ENCODE measurements at regions of chr12 and their contacts with region 1.

Region 1: GRCh38 chr12:47079468-47079980 is at the starts of genes AMIGO2 and PCED1B:
- DNase-seq: peak; percentile 83 to 91 (median 85)
- H3K4me3 ChIP-seq: peak within 1 kb of the TSS; percentile 24 to 90 (median 57)
- H3K27ac ChIP-seq: peak within 1 kb of the TSS; percentile 68 to 93 (median 90)
- H3K4me1 ChIP-seq: peaks cover 6 to 42% of the 10 kb centered on the region in 2 donors
- H3K27me3 ChIP-seq: no peaks in the 10 kb centered on the region
- CTCF ChIP-seq: peak in 4 of 6 experiments; percentile 19 to 39 (median 32)
- POLR2A ChIP-seq: peak; percentile 17 to 69
- total RNA-seq, gene AMIGO2: 16.5 to 34.7 (median 29.9) TPM
- total RNA-seq, gene PCED1B: 8.0 to 110 (median 49.2) TPM

Region 2: GRCh38 chr12:47038270-47038748 is 41.2 kb before region 1 on chr12:
- intact Hi-C with region 1: loop called in 1 of 2 experiments (anchors 5 kb)
- DNase-seq: no peak
- H3K4me3 ChIP-seq: no peak overlapping the region
- H3K27ac ChIP-seq: no peak overlapping the region
- H3K4me1 ChIP-seq: peaks cover 0 to 5% of the 10 kb centered on the region in 2 donors
- H3K27me3 ChIP-seq: no peaks in the 10 kb centered on the region
- CTCF ChIP-seq: no peak
- POLR2A ChIP-seq: no peak

Region 3: DNA sequence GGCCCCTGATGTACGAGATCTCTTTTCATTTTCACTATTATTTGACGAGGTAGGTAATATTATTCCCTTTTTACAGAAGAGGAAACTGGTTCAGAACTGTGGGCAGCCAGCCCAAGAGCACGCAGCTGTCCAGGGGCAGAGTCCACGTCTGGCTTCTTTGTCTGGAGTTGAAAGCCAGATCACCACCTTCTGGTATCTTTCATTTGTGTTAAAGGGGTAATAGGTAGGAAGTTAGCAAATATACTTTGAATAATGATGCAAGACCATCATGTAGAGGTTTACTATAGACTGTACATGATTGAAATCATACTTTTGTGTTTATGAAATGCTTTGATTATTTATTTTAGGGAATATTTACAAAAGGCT is 144.3 kb after region 1 on chr12:
- intact Hi-C with region 1: loop called in 1 of 2 experiments (anchors 10 kb)
- DNase-seq: peak in 6 of 7 donors; percentile 55 to 75 (median 61)
- H3K4me3 ChIP-seq: peak overlapping the region in 2 of 4 donors; percentile 15 to 51
- H3K27ac ChIP-seq: peak overlapping the region; percentile 27 to 90 (median 82)
- H3K4me1 ChIP-seq: peaks cover 21 to 31% of the 10 kb centered on the region in 2 donors
- H3K27me3 ChIP-seq: no peaks in the 10 kb centered on the region
- CTCF ChIP-seq: no peak
- POLR2A ChIP-seq: peak in 1 of 2 donors; percentile 23

Region 4: DNA sequence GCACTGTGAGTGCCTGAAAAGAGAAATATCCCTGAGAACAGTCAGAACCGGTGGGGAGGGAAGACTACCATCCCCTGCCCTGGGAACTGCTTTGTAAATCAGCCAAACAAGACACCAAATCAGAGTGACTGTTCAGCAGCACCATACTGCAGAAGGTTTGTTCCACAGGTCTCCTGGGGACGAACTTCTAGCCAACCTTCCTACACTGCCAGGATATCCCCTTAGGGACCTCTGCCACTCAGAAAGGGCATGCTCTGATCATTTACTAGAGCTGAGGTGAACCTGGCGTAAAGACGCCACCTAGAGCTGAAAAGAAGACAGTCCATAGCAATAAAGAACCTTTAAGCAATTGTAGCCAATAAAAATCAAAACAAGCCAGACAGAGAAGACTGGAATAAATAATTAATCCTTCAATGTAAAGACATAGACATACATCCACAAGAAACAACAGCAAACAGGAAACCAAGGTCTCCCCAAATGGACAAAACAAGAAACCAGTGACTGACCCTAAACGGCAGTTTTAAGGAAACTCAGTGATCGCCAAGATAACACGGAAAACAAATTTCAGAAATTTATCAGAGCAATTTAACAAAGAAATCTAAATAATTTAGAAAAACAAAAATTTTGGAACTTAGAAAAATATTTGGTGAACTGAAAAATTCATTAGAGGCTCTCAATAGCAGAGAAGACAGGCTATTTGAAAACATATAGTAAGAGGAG is 228.3 kb after region 1 on chr12:
- intact Hi-C with region 1: loop called in 1 of 2 experiments (anchors 5 kb)
- DNase-seq: peak; percentile 31 to 74 (median 47)
- H3K4me3 ChIP-seq: no peak overlapping the region
- H3K27ac ChIP-seq: no peak overlapping the region
- H3K4me1 ChIP-seq: no peaks in the 10 kb centered on the region
- H3K27me3 ChIP-seq: no peaks in the 10 kb centered on the region
- CTCF ChIP-seq: peak; percentile 36 to 81 (median 70)
- POLR2A ChIP-seq: no peak

Measured in adrenal gland (tissue), 19 donors.